Common myeloid progenitor, CD34-positive (primary cell): ENCODE measurements at regions of chr13 and their contacts with region 1.

Region 1: DNA sequence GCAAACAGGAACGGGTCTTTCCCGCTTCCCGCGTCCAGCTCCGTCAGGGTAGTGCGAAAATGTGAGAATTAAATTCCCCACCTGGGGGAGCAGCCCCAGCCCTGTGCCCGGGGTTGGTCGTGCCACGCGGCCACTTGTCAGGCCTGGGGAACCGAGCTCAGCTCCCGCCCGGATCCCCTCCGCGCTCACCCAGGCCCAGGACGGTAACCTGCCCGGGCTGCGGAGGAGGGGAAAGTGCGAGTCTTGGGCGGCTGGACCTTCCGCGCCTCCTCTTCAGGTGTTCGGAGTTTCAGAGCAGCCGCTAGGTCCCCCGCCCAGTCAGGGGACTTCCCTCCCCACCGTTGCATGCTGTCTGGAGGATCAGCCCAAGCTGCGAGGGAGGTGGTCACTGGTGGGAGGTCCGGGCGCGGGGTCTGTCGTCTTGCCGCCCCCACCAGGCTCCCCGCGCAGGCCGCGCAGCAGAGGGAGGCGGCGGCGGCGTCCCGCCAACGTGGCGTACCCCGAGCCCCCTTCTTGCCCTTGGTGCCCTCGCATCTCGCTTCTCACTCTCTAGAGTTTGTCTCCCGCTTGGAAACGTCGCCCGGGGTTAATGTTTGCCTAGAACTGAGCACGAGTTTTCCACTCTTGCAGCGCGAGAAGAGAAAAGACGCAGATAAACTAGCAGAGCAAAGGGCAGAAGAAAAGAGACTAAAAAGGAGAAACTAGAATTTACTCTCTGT is 8.1 kb downstream of the URAD start:
- DNase-seq: no peak
- H3K4me3 ChIP-seq: no peak overlapping the region
- H3K27ac ChIP-seq: no peak overlapping the region
- H3K4me1 ChIP-seq: peaks cover 0 to 33% (median 18%) of the 10 kb centered on the region in 4 experiments
- H3K27me3 ChIP-seq: peaks cover 7 to 82% (median 55%) of the 10 kb centered on the region in 5 experiments

Region 2: GRCh38 chr13:27960362-27961226 is 19.8 kb before region 1 on chr13:
- CTCF ChIA-PET with region 1: interaction called, 11 read pairs
- POLR2A ChIA-PET with region 1: no interaction called
- DNase-seq: peak; percentile 50 to 83 (median 76)
- H3K4me3 ChIP-seq: peak overlapping the region in 5 of 7 experiments; percentile 8 to 64 (median 50)
- H3K27ac ChIP-seq: no peak overlapping the region
- H3K4me1 ChIP-seq: peaks cover 0 to 17% (median 14%) of the 10 kb centered on the region in 4 experiments
- H3K27me3 ChIP-seq: peaks cover 26 to 99% (median 64%) of the 10 kb centered on the region in 5 experiments

Region 3: GRCh38 chr13:27968316-27969081 is 11.9 kb before region 1 on chr13:
- CTCF ChIA-PET with region 1: interaction called, 18 read pairs
- POLR2A ChIA-PET with region 1: no interaction called
- DNase-seq: peak in 2 of 3 donors; percentile 60 to 68
- H3K4me3 ChIP-seq: peak overlapping the region in 5 of 7 experiments; percentile 7 to 62 (median 54)
- H3K27ac ChIP-seq: no peak overlapping the region
- H3K4me1 ChIP-seq: peaks cover 0 to 37% (median 27%) of the 10 kb centered on the region in 4 experiments
- H3K27me3 ChIP-seq: peaks cover 10 to 100% (median 66%) of the 10 kb centered on the region in 5 experiments